Gastrocnemius medialis (tissue), 4 donors: ENCODE measurements at regions of chr10 and their contacts with region 1.

Region 1: DNA sequence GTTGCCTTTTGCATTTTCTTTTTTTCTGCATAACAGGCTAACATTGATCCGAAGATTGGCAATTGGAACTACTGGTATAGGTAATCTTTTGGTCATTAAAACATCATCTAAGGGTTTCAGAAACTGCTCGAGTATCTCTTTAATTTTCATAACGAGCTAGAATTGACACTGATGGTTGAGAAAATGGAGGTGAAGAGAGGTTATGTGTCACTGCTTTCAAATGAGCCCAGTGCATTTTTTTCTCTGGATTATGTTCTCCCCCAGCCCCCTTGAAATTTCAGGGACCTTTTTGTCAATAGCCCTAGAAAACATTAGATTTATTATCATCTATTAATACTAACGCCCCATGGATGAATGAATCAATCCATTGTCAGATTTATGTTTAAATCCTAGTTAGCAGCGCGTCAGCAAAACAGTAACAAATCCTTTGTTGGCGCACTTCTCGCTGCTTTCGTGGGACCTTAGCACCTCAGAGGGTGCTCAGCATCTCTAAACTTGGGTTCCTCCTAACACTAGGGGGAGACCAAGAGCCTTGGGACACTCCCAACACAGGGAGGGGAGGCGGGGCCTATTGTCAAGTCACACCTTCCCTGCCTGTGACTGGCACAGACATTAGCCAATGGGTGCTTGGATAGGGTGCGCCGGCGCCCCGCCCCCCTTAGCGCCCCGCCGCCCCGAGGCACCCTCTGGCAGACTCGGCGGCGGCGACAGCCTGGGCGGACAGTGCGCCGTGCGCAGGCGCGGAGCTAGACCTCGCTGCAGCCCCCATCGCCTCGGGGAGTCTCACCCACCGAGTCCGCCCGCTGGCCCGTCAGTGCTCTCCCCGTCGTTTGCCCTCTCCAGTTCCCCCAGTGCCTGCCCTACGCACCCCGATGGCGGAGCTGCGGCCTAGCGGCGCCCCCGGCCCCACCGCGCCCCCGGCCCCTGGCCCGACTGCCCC is at the start of gene SUFU:
- DNase-seq: peak; percentile 98
- ATAC-seq: peak; percentile 62 to 68
- H3K4me3 ChIP-seq: peak within 1 kb of the TSS; percentile 89 to 97 (median 94)
- H3K27ac ChIP-seq: peak within 1 kb of the TSS; percentile 95 to 100 (median 98)
- H3K4me1 ChIP-seq: peaks cover 68 to 72% of the 10 kb centered on the region in 2 donors
- H3K27me3 ChIP-seq: no peaks in the 10 kb centered on the region
- CTCF ChIP-seq: peak; percentile 78 to 94 (median 92)
- POLR2A ChIP-seq: peak; percentile 73 to 79
- total RNA-seq, gene SUFU: 7.3 to 11.8 (median 7.9) TPM

Region 2: DNA sequence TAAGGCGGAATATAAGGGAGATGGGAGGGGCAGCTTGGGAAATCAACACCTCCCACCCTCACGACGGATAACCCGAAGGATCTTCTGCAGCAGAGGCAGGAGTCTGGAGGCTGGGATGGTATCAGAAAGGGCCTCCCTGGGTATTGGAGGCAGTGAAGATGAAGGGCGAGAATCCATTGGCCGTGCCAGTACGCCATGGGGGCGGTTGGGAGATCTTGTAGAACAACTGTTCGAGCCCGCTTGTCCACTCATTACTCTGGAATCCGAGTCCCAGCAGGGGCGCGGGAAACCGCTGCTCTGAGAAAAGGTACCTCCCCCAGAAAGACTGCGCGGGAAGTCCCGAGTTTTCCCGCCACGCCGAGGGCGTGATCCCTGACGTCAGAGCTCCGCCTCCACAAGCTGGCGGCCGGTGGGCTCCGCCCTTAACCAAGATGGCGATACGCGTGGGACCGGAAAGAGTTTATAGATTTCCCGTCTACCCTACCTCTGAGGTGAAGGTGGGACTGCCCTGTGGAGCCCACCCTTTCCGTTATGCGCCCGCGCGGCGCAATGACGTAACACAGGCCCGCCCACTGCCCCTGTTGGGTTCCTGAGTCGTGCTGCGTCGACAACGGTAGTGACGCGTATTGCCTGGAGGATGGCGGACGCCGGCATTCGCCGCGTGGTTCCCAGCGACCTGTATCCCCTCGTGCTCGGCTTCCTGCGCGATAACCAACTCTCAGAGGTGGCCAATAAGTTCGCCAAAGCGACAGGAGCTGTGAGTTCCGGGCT is 351.6 kb before region 1 on chr10 and contains the start of gene NOLC1:
- in situ Hi-C with region 1: no loop called
- intact Hi-C with region 1: loop called (anchors 1 kb)
- DNase-seq: peak; percentile 96 to 99
- ATAC-seq: peak; percentile 98 to 99
- H3K4me3 ChIP-seq: peak within 1 kb of the TSS; percentile 75 to 99 (median 92)
- H3K27ac ChIP-seq: peak within 1 kb of the TSS; percentile 82 to 97 (median 94)
- H3K4me1 ChIP-seq: peaks cover 12 to 16% of the 10 kb centered on the region in 2 donors
- H3K27me3 ChIP-seq: no peaks in the 10 kb centered on the region
- CTCF ChIP-seq: peak in 1 of 5 experiments; percentile 24
- POLR2A ChIP-seq: peak; percentile 84 to 90
- total RNA-seq, gene NOLC1: 37.2 to 76.7 (median 71.1) TPM

Region 3: DNA sequence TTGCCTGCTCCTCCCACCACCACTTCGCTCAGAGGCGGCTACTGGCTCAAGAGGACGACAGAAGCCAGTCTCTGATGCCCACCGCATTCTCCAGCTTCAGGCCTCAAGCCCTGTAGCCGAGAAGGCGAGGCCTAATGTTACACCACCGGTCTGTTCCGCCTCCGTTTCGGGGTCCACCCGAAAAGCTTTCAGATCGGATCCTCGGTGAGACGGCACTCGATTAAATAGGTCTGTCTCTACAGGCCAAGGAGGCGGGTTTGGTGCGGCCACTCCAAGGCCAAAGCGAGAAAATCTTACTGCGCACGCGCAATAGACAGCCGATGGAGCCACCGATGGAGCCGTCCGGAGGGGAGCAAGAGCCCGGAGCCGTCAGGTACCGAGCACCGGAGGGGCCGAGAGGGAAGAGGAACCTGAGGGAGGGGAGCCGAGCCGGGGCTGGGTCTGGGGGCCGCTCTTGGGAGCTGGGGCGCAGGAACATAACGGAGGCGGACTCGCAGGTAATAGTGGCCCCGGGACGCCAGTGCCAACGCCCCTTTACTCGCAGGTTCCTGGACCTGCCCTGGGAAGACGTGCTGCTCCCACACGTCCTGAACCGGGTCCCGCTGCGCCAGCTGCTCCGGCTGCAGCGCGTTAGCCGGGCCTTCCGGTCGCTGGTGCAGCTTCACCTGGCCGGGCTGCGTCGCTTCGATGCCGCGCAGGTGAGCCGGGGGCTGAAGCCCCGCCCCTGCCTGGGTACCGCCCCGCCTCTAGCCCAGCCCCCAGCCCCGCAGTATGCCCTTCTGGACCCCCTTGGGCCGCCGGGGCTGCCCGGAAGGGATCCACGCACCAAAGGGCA is 82.5 kb before region 1 on chr10 and contains the start of gene FBXL15:
- in situ Hi-C with region 1: no loop called
- intact Hi-C with region 1: loop called (anchors 1 kb)
- DNase-seq: peak; percentile 96
- ATAC-seq: peak; percentile 90 to 94
- H3K4me3 ChIP-seq: peak within 1 kb of the TSS; percentile 82 to 92 (median 87)
- H3K27ac ChIP-seq: peak within 1 kb of the TSS; percentile 85 to 97 (median 94)
- H3K4me1 ChIP-seq: peaks cover 27 to 30% of the 10 kb centered on the region in 2 donors
- H3K27me3 ChIP-seq: peaks cover 19 to 29% (median 23%) of the 10 kb centered on the region in 3 donors
- CTCF ChIP-seq: peak in 2 of 5 experiments; percentile 22 to 41
- POLR2A ChIP-seq: peak; percentile 30 to 39
- total RNA-seq, gene FBXL15: 14.2 to 34.8 (median 21.0) TPM

Region 4: GRCh38 chr10:102583435-102584417 is 80.2 kb after region 1 on chr10:
- in situ Hi-C with region 1: loop called in 1 of 4 experiments (anchors 5 kb)
- intact Hi-C with region 1: loop called (anchors 1 kb)
- DNase-seq: peak; percentile 69 to 80
- ATAC-seq: peak; percentile 91 to 96
- H3K4me3 ChIP-seq: no peak overlapping the region
- H3K27ac ChIP-seq: no peak overlapping the region
- H3K4me1 ChIP-seq: peaks cover 3 to 22% of the 10 kb centered on the region in 2 donors
- H3K27me3 ChIP-seq: no peaks in the 10 kb centered on the region
- CTCF ChIP-seq: peak; percentile 85 to 89 (median 87)
- POLR2A ChIP-seq: no peak

Region 5: GRCh38 chr10:102713814-102714620 is 210.5 kb after region 1 on chr10 and contains the start of gene ARL3:
- in situ Hi-C with region 1: no loop called
- intact Hi-C with region 1: loop called (anchors 10 kb)
- DNase-seq: peak; percentile 96 to 97
- ATAC-seq: peak; percentile 88
- H3K4me3 ChIP-seq: peak within 1 kb of the TSS; percentile 74 to 99 (median 91)
- H3K27ac ChIP-seq: peak within 1 kb of the TSS; percentile 83 to 89 (median 86)
- H3K4me1 ChIP-seq: peaks cover 26 to 28% of the 10 kb centered on the region in 2 donors
- H3K27me3 ChIP-seq: no peaks in the 10 kb centered on the region
- CTCF ChIP-seq: peak; percentile 48 to 66 (median 61)
- POLR2A ChIP-seq: peak; percentile 58 to 70
- total RNA-seq, gene ARL3: 1.0 to 2.4 (median 1.5) TPM